Prostate gland (tissue), 2 donors: ENCODE measurements at regions of chr6 and their contacts with region 1.

Region 1: GRCh38 chr6:105077596-105078385 is 102.0 kb downstream of the POPDC3 start:
- DNase-seq: no peak
- H3K4me3 ChIP-seq: no peak overlapping the region
- H3K27ac ChIP-seq: no peak overlapping the region
- H3K4me1 ChIP-seq: no peaks in the 10 kb centered on the region
- H3K27me3 ChIP-seq: no peaks in the 10 kb centered on the region
- CTCF ChIP-seq: peak in 3 of 4 experiments; percentile 44 to 60 (median 52)
- POLR2A ChIP-seq: no peak

Region 2: GRCh38 chr6:104995989-104996617 is 81.7 kb before region 1 on chr6:
- intact Hi-C with region 1: loop called (anchors 2 kb)
- DNase-seq: peak; percentile 10
- H3K4me3 ChIP-seq: no peak overlapping the region
- H3K27ac ChIP-seq: peak overlapping the region; percentile 49 to 51
- H3K4me1 ChIP-seq: no peaks in the 10 kb centered on the region
- H3K27me3 ChIP-seq: no peaks in the 10 kb centered on the region
- CTCF ChIP-seq: peak in 3 of 4 experiments; percentile 30 to 60 (median 59)
- POLR2A ChIP-seq: no peak

Region 3: DNA sequence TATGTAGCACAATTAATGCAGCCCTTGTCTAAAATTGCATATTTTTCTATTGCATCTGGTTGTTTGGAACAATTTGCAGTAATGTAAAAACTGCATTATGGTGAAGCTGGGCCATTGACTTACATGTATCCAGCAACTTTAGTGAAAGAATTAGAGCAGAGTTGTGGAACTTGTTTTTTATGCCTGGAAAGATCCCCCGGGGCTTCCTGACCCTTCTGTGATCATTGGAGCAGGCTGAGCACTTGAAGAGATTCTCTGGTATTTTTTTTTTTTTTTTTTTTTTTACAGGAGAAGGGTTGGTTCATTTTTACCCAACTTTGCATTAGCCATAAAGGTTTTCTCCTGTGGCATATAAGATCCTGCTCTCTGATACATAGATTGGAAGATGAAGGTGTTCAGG is 75.9 kb before region 1 on chr6:
- intact Hi-C with region 1: loop called (anchors 2 kb)
- DNase-seq: no peak
- H3K4me3 ChIP-seq: no peak overlapping the region
- H3K27ac ChIP-seq: no peak overlapping the region
- H3K4me1 ChIP-seq: no peaks in the 10 kb centered on the region
- H3K27me3 ChIP-seq: no peaks in the 10 kb centered on the region
- CTCF ChIP-seq: no peak
- POLR2A ChIP-seq: no peak

Region 4: DNA sequence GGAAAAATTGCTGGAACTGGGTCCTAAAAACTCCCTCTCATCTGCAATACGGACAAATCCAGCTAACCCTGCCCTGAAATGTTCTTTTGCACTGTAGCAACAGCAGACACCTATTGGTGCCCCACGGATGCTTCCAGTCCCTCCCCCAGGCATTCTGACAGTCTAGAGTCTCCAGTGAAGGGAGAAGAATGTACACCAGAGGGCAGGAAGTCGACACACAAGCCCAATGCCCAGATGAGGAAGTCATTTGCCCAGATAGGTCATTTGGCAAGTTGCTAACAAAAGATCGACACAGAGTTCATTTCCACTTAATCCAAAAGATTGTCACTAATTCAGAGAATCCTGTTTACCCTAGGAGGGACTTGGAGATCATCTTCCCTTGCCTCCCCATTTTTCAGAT is 715.3 kb after region 1 on chr6:
- intact Hi-C with region 1: no loop called
- DNase-seq: no peak
- H3K4me3 ChIP-seq: no peak overlapping the region
- H3K27ac ChIP-seq: no peak overlapping the region
- H3K4me1 ChIP-seq: no peaks in the 10 kb centered on the region
- H3K27me3 ChIP-seq: no peaks in the 10 kb centered on the region
- CTCF ChIP-seq: no peak
- POLR2A ChIP-seq: no peak